ENCODE measurements at regions of chr12 and their contacts with region 1.

Region 1: GRCh38 chr12:6825398-6826124 is 2.6 kb upstream of the P3H3 start:
- DNase-seq: peak; percentile 87 to 95
- ATAC-seq: peak; percentile 40 to 78
- H3K4me3 ChIP-seq: no peak overlapping the region
- H3K27ac ChIP-seq: peak overlapping the region in 1 of 2 experiments; percentile 39; a peak in 3 of 6 replicates
- H3K4me1 ChIP-seq: peaks cover 31% of the 10 kb centered on the region
- CTCF ChIP-seq: peak; percentile 92
- EP300 ChIP-seq: no peak
- POLR2A ChIP-seq: no peak
- RAD21 ChIP-seq: peak; percentile 91 to 94

Region 2: GRCh38 chr12:6723607-6724396 is 101.8 kb before region 1 on chr12 and contains the start of gene COPS7A:
- CTCF ChIA-PET with region 1: interaction called, 11 read pairs
- POLR2A ChIA-PET with region 1: interaction called, 3 read pairs
- DNase-seq: peak; percentile 99
- ATAC-seq: peak; percentile 98
- H3K4me3 ChIP-seq: peak within 1 kb of the TSS; percentile 61
- H3K27ac ChIP-seq: peak within 1 kb of the TSS; percentile 86 to 89
- H3K4me1 ChIP-seq: peaks cover 13% of the 10 kb centered on the region
- CTCF ChIP-seq: no peak
- EP300 ChIP-seq: no peak
- POLR2A ChIP-seq: peak; percentile 92
- RAD21 ChIP-seq: no peak
- polyA plus RNA-seq, gene COPS7A: 78.8 and 95.0 TPM in 2 replicates

Region 3: DNA sequence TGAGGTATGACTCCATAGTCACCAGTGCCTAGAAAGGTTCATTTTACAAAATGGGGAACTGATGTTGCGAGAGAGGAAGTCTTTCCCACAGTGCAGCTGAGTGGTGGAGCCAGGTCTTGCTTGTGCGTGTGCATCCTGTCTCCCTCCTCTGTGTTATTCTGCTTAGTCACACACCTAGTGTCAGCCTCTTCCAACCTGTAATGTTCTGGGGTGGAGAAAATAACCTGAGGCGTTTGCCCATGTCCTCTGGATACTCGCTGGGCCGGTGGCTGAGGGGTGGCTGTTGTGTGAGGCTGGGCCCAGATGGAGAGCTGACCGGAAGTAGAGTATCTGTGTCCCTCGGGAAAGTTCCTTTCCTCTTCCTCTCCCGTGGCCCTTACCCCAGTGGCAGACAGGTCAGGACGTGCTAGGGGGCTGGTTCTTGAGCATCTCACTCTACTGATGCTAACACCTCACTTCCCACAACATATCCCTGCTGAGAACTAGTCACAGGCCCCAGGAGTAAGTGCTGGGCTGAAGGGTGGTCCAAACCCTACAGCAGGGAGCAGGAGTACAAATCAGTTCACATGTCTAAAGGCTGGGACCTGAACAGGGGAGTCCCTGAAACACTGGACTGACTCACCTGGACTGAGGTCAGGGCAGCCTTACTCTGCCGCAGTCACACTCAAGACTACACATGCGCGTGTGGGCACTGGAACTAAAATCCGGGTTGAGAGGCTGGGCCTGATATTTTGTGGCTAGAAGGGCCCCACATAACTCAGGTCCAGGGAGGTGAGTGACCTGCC is 79.6 kb before region 1 on chr12:
- CTCF ChIA-PET with region 1: interaction called, 306 read pairs
- POLR2A ChIA-PET with region 1: no interaction called
- DNase-seq: no peak
- ATAC-seq: peak; percentile 25 to 49; a peak in 3 of 6 replicates
- H3K4me3 ChIP-seq: no peak overlapping the region
- H3K27ac ChIP-seq: no peak overlapping the region
- H3K4me1 ChIP-seq: 0 out of 3 replicates have a peak, but pooled peaks cover 4% of the 10 kb centered on the region
- CTCF ChIP-seq: no peak
- EP300 ChIP-seq: no peak
- POLR2A ChIP-seq: no peak
- RAD21 ChIP-seq: no peak

Region 4: DNA sequence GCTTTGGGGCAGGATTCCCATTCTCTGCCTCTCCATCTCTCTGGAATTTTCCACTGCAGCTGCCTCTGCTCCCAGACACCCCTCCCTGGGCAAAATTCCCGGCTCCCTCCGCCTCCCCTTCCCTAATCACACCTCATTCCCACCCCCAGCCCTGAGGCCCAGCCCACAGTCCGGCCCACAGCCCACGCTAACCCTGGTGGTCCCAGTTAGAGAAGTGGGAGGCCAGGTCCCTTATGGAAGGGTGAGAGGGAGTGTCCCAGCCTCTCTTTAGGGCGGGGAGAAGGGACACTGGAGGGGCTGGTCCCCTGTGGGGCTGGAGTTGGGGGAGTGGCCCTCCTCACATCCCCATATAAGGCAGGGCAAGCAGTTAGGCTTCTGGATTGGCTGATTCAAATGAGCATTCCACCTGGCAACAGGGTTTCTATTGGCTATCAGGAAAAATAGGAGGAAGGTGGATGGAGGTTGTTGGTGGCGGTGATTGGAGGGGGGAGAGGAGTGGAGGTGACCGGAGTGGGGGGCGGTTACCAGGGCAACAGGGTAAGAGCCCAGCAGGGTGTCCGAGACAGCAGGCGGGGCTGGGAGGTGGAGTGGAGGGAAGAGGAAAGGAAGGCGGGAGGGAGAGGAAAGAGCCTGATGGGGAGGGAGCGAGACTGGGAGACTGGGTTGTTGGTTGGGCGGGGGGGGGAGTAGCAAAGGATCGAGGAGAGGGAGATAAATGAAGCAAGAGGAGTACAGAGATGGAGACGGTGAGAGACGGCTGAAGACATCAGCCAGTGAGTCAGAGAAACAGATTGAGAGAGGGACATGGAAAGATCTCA is 61.3 kb before region 1 on chr12:
- CTCF ChIA-PET with region 1: interaction called, 44 read pairs
- POLR2A ChIA-PET with region 1: interaction called, 4 read pairs
- DNase-seq: peak; percentile 100
- ATAC-seq: peak; percentile 69 to 87
- H3K4me3 ChIP-seq: peak overlapping the region; percentile 97
- H3K27ac ChIP-seq: peak overlapping the region; percentile 95 to 99
- H3K4me1 ChIP-seq: peaks cover 39% of the 10 kb centered on the region
- CTCF ChIP-seq: no peak
- EP300 ChIP-seq: no peak
- POLR2A ChIP-seq: peak; percentile 47
- RAD21 ChIP-seq: no peak

Region 5: DNA sequence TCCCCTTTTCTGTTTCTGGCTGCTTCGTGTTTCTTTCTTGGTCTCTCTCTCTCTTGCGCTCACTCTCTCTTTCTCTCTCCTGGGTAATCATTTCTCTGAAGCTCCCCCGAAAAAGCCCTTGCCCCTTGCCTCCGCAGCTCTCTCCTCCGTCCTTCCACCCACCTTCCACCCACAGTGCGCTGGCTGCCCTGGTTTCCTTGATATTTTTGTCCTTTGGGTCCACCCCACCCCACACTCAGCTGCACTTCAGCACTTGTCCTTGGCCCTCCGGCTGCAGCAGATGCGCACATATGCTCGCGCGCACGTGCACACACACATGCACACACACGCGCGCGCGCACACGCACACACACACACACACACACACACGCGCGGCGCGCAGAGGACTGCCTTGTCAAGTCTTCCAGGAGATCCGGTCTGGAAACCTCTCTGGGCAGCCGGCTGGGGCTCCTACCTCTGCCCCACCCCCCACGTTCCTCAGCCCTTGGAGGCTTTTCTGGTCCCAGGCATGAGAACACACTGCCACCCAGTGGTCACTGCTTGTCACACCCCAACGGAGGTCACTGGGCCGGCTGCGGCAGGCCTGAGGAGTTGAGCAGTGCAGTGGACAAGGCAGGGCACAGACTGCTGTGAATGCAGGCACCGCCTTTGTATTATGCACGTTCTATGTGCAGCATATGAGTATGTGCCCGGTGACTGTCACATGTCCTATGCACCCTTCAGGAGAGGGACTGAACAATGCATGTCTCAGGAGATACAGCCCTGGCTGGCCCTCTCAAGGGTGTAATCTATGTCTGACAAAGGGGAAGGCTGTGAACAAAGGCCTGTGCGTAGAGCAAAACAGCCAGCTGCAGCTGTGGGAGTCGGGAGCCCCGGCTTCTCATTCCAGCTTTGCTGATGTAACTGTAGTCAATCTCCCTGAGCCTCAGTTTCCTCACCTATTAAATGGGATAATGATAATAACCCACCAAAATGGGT is 46.7 kb before region 1 on chr12:
- CTCF ChIA-PET with region 1: interaction called, 193 read pairs
- POLR2A ChIA-PET with region 1: no interaction called
- DNase-seq: peak; percentile 71 to 91
- ATAC-seq: peak; percentile 94 to 97
- H3K4me3 ChIP-seq: peak overlapping the region; percentile 30; the same call in 2 of the 3 replicates
- H3K27ac ChIP-seq: peak overlapping the region; percentile 34 to 80; a peak in 4 of 6 replicates
- H3K4me1 ChIP-seq: peaks cover 15% of the 10 kb centered on the region; the same call in 2 of the 3 replicates
- CTCF ChIP-seq: peak; percentile 94
- EP300 ChIP-seq: no peak
- POLR2A ChIP-seq: no peak
- RAD21 ChIP-seq: peak; percentile 98 to 99

Region 6: GRCh38 chr12:6807170-6807569 is 18.4 kb before region 1 on chr12:
- CTCF ChIA-PET with region 1: interaction called, 129 read pairs
- POLR2A ChIA-PET with region 1: no interaction called
- DNase-seq: no peak
- ATAC-seq: 0 out of 6 replicates have a peak, but pooled peaks of 1 of the 2 experiments have one; percentile 31
- H3K4me3 ChIP-seq: no peak overlapping the region
- H3K27ac ChIP-seq: no peak overlapping the region
- H3K4me1 ChIP-seq: peaks cover 6% of the 10 kb centered on the region; the same call in 1 of the 3 replicates
- CTCF ChIP-seq: no peak
- EP300 ChIP-seq: no peak
- POLR2A ChIP-seq: no peak
- RAD21 ChIP-seq: no peak

Region 7: DNA sequence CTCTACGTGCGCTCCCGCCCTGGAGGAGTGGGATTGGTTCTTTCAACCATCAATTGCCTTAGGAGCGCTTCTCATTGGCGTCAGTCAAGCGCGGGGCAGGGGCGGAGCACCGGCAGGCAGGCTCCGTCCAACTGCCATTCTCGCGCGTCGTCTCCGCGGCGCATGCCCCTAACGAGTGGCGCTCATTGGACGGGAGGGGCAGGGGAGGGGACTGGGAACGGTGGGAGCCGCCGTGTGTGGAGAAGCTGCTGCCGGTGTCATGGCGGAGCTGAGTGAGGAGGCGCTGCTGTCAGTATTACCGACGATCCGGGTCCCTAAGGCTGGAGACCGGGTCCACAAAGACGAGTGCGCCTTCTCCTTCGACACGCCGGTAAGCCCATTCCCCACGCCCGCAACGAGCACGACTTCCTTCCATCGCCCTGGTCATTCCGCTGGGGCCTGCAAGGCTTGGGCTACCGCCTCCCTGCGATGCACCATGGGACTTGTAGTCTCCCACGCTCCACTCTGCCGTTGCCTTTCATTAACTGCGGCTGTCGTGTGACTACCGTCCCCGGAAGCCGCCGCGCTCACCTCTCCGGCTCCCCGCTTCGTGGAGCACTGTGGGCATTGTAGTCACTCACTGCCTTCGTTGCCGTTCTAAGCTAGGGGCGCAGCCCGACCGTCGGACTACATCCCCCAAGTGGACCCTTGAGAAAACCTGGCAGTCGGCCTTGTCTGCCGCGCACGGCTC is 26.5 kb after region 1 on chr12 and contains the start of gene USP5:
- CTCF ChIA-PET with region 1: interaction called, 11 read pairs
- POLR2A ChIA-PET with region 1: interaction called, 7 read pairs
- DNase-seq: peak; percentile 99 to 100
- ATAC-seq: peak; percentile 88 to 91
- H3K4me3 ChIP-seq: peak within 1 kb of the TSS; percentile 50
- H3K27ac ChIP-seq: peak within 1 kb of the TSS; percentile 87 to 89
- H3K4me1 ChIP-seq: peaks cover 23% of the 10 kb centered on the region
- CTCF ChIP-seq: no peak
- EP300 ChIP-seq: no peak
- POLR2A ChIP-seq: peak; percentile 80
- RAD21 ChIP-seq: no peak
- polyA plus RNA-seq, gene USP5: 58.6 and 64.5 TPM in 2 replicates

Region 8: DNA sequence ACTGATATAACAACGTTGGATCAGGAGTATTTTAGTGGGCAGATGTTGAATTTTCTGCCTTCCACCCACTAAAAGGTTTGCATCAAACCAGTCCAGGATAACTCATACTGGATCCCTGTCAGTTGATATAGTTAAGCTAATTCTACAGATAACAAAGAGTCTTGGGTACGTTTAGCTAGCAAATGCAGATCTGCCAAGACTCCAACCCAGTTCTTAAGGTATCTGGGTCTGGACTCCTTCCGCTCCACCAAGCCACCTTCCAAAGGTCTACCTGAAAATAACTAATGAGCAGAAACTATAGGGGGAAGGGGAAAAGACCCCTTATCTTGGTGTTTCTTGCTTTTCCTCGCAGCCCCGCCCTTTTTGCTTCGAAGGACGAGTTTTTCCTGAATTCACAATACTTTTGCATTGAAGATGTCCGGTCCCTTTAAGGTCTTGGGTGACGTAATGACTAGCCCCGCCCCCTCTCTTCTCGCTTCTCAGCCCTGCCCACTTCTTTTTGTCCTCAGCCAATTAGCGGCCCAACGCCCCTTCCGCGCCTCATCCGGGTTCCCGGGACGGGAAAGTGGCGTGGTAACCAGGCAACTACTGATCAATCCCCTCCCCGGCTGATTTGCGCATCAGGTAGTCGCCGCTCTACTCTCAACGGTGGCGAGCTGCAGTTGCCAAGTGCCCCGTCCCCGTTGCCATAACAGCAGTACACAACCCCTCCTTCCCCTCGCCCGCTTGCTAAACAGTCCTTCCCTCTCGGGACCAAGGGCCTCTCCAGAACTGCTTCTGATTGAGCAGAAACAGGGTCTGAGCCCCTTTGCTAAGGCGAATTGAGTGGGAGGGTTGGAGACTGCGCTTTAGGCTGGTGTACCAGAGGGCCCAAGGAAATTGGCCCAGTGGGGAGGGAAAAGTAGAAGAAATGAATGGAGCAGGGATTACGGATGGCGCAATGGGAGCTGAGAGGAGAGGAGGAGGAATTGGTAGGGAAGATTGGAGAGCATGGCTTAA is 79.0 kb after region 1 on chr12 and contains the start of gene LRRC23:
- CTCF ChIA-PET with region 1: no interaction called
- POLR2A ChIA-PET with region 1: no interaction called
- DNase-seq: peak; percentile 95 to 98
- ATAC-seq: peak; percentile 94 to 97
- H3K4me3 ChIP-seq: peak within 1 kb of the TSS; percentile 78
- H3K27ac ChIP-seq: peak within 1 kb of the TSS; percentile 82 to 91
- H3K4me1 ChIP-seq: peaks cover 11% of the 10 kb centered on the region; the same call in 2 of the 3 replicates
- CTCF ChIP-seq: no peak
- EP300 ChIP-seq: no peak
- POLR2A ChIP-seq: peak; percentile 71
- RAD21 ChIP-seq: no peak
- polyA plus RNA-seq, gene LRRC23: 33.3 and 40.4 TPM in 2 replicates

Region 9: DNA sequence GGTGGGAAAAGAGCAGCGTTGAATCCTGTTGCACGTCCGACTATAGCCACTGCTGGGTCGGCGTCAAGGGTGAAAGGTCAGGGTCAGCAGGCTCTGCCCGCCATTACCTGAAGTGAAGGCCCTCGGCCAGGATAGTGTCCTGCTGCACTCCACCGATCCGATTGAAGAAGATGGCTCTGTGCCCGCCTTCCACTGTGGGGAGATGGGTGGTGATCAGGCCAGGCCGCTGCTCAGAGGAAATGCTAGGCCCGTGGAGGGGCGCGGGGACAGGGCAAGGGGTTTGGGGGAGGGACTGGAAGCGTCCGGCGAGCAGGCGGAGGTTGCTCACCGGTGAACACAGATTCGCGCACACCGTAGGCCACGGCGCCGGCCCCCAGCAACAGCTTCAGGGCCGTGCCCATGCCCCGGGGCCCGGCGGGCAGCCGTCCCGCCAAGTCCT is 144.5 kb after region 1 on chr12:
- CTCF ChIA-PET with region 1: no interaction called
- POLR2A ChIA-PET with region 1: no interaction called
- DNase-seq: peak in 1 of 2 experiments; percentile 36
- ATAC-seq: peak; percentile 61 to 63
- H3K4me3 ChIP-seq: peak overlapping the region; percentile 80
- H3K27ac ChIP-seq: peak overlapping the region; percentile 89 to 97
- H3K4me1 ChIP-seq: peaks cover 33% of the 10 kb centered on the region
- CTCF ChIP-seq: no peak
- EP300 ChIP-seq: no peak
- POLR2A ChIP-seq: 0 out of 2 replicates have a peak, but pooled peaks have one; percentile 33
- RAD21 ChIP-seq: no peak

Region 10: GRCh38 chr12:7090222-7090998 is 264.8 kb after region 1 on chr12:
- CTCF ChIA-PET with region 1: no interaction called
- POLR2A ChIA-PET with region 1: no interaction called
- DNase-seq: no peak
- ATAC-seq: no peak
- H3K4me3 ChIP-seq: no peak overlapping the region
- H3K27ac ChIP-seq: peak overlapping the region; percentile 30 to 91; a peak in 4 of 6 replicates
- H3K4me1 ChIP-seq: peaks cover 17% of the 10 kb centered on the region; the same call in 2 of the 3 replicates
- CTCF ChIP-seq: no peak
- EP300 ChIP-seq: no peak
- POLR2A ChIP-seq: no peak
- RAD21 ChIP-seq: no peak